Activated naive CD4-positive, alpha-beta T cell treated with anti-CD3 and anti-CD28 coated beads for 36 hours (primary cell): ENCODE measurements at regions of chr1 and their contacts with region 1.

Region 1: DNA sequence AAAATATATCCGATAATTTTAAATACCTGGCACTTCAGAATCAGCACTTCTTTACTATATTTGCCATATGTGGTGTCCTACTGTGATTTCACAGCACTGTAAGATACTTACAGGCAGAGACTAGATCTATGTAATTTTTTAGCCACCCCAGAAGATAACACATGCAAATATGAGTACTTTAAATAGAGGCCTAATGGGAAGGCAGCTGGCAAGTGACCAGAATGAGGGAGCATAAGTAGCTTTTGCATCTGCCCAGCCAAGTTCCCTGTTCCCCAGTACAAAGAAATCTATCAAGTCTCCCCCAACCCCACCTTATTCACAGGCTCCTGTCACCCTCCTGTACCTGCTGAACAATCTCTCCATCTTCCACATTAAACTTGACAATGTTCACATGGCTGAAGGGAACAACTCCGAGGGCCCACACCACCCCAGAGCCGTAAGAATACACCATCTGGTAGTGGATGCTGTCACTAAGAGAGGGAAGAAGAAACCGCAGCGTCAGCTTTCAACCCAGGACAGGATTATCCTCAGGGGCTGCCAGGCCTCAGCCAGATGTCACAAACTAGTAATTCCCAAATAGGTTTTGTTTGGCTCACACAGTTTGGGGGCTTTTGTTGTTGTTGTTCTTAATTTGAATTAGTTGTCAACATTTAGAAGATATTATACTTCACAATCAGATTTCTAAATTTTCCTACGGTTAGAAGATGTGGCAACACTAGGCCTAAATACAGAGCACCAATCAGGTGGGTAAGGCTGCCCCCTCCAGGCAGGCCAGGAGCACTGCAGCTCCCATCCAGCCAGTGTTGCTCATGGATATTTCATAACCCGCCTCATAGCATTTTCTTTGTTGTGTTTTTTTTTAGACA is 10.4 kb downstream of the EMC1 start:
- DNase-seq: peak; percentile 85
- H3K4me3 Mint-ChIP-seq: no peak overlapping the region
- H3K27ac Mint-ChIP-seq: peak overlapping the region; percentile 61
- H3K4me1 Mint-ChIP-seq: no peaks in the 10 kb centered on the region
- H3K27me3 Mint-ChIP-seq: no peaks in the 10 kb centered on the region

Region 2: GRCh38 chr1:18883636-18884418 is 357.1 kb before region 1 on chr1:
- CTCF ChIA-PET with region 1: interaction called, 4 read pairs
- intact Hi-C with region 1: loop called (anchors 2 kb)
- DNase-seq: peak; percentile 83
- H3K4me3 Mint-ChIP-seq: no peak overlapping the region
- H3K27ac Mint-ChIP-seq: peak overlapping the region; percentile 18
- H3K4me1 Mint-ChIP-seq: no peaks in the 10 kb centered on the region
- H3K27me3 Mint-ChIP-seq: no peaks in the 10 kb centered on the region

Region 3: GRCh38 chr1:18956369-18957135 is 284.4 kb before region 1 on chr1 and contains the start of gene IFFO2:
- CTCF ChIA-PET with region 1: no interaction called
- intact Hi-C with region 1: loop called (anchors 5 kb)
- DNase-seq: peak; percentile 98
- H3K4me3 Mint-ChIP-seq: peak within 1 kb of the TSS; percentile 91
- H3K27ac Mint-ChIP-seq: peak within 1 kb of the TSS; percentile 47
- H3K4me1 Mint-ChIP-seq: peaks cover 48% of the 10 kb centered on the region
- H3K27me3 Mint-ChIP-seq: no peaks in the 10 kb centered on the region
- total RNA-seq, gene IFFO2: 24.9 to 27.0 TPM

Region 4: DNA sequence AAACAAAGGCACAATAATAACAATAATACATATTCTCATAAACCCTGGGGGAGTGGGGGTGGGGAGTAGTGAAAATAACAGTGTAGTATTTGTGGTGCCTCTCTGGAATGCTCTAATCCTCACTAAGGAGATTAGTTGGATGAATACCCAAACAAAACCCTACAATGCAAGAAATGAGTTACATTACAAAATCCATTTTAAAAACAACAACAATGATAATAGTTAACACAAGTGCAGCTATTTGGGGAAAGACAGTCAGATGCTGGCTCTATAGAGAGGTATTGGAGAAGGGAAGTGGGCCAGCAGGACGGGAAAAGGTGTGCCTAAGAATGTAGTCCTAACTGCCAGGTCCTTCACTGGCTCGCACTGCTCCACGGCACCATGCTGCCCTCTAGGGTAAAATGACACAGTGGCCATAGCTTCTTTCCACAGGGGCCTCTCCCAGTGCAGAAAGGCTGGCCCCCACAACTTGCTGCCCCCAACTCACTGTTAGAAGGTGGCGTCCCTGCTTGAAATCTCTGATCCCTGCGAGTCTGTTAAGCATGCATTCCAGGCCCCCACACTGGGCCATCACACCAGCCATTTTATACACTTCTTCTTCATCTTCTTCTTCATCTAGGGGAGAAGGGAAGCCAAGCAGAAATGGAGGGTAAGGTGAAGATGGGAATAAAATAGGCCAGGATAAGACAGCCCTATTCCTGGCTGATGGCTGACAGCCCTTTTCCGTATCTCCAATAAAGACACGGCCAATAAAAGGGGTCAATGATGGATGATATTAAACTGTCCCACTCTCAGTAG is 144.7 kb before region 1 on chr1:
- CTCF ChIA-PET with region 1: interaction called, 4 read pairs
- intact Hi-C with region 1: loop called (anchors 10 kb)
- DNase-seq: peak; percentile 35
- H3K4me3 Mint-ChIP-seq: no peak overlapping the region
- H3K27ac Mint-ChIP-seq: no peak overlapping the region
- H3K4me1 Mint-ChIP-seq: no peaks in the 10 kb centered on the region
- H3K27me3 Mint-ChIP-seq: no peaks in the 10 kb centered on the region

Region 5: GRCh38 chr1:19179597-19180264 is 61.2 kb before region 1 on chr1:
- CTCF ChIA-PET with region 1: interaction called, 6 read pairs
- intact Hi-C with region 1: loop called (anchors 5 kb)
- DNase-seq: peak; percentile 52
- H3K4me3 Mint-ChIP-seq: no peak overlapping the region
- H3K27ac Mint-ChIP-seq: peak overlapping the region; percentile 54
- H3K4me1 Mint-ChIP-seq: peaks cover 18% of the 10 kb centered on the region
- H3K27me3 Mint-ChIP-seq: no peaks in the 10 kb centered on the region